ENCODE measurements at regions of chr2 and their contacts with region 1.

Region 1: DNA sequence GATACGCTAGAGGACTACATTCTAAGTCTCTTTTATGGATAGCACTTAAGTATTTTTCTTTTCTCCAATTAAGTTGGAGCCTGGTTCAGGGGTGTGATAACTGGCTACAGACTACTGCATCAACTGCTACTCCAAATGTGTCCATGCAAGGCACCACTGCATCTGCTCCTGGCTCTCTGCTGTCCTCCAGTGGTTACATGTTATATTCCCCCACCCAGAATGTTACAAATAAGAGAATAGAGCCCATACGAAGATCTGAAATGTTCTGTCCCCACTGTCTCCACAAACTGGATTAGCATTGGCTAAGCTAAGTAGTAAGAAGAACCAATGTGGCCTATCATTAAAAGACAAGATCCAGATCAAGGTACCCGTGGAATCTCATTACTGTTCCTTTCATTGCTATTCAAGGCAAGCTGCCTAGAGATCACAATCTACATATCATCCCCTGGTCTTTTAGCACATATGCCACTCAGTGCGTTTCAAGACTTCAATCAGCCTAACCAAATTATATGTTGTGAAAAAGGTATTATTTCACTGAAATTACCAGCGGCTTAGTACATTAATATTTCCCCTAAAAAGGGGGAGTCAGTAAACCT is 308.3 kb upstream of the SLC8A1 start:
- DNase-seq: peak; percentile 35
- ATAC-seq: peak; percentile 99
- H3K4me3 ChIP-seq: no peak overlapping the region
- H3K27ac ChIP-seq: no peak overlapping the region
- H3K4me1 ChIP-seq: no peaks in the 10 kb centered on the region
- H3K27me3 ChIP-seq: no peaks in the 10 kb centered on the region
- CTCF ChIP-seq: peak; percentile 77
- EP300 ChIP-seq: no peak
- POLR2A ChIP-seq: no peak
- RAD21 ChIP-seq: peak; percentile 68

Region 2: GRCh38 chr2:39837856-39838453 is 922.2 kb before region 1 on chr2:
- CTCF ChIA-PET with region 1: no interaction called
- POLR2A ChIA-PET with region 1: no interaction called
- in situ Hi-C with region 1: no loop called
- intact Hi-C with region 1: loop called (anchors 10 kb)
- DNase-seq: peak; percentile 61
- ATAC-seq: peak; percentile 95
- H3K4me3 ChIP-seq: no peak overlapping the region
- H3K27ac ChIP-seq: no peak overlapping the region
- H3K4me1 ChIP-seq: no peaks in the 10 kb centered on the region
- H3K27me3 ChIP-seq: no peaks in the 10 kb centered on the region; a peak in 1 of 5 replicates
- CTCF ChIP-seq: peak; percentile 85
- EP300 ChIP-seq: no peak
- POLR2A ChIP-seq: no peak
- RAD21 ChIP-seq: 0 out of 2 replicates have a peak, but pooled peaks have one; percentile 21

Region 3: DNA sequence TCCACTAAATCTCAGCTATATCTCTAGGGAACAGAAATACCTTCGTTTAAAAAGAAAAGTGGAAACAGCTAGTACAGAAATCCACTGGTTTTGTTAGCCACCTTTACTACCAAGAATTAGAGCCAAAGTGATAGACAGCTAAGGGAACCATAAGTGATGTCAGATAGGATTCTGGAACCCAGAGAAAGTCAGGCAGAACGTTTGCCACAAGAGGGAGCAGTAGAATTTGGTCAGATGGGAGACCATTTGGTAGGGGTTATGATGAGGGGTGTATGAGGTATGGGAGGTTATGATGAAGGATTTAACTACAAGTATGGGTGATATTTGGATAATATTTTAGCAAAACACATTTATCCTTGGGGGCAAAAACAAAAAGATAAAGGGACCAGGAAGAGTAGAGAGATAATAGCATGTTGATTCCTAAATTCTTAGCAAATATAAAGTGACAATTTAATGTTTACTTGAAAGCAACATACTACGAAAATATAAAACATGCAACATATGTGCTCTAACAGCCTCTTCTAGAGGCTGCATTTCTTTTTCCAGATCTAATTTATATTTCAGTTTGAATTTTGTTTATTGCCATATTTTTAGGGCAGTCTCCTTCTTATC is 311.6 kb before region 1 on chr2:
- CTCF ChIA-PET with region 1: interaction called, 3 read pairs
- POLR2A ChIA-PET with region 1: no interaction called
- in situ Hi-C with region 1: no loop called
- intact Hi-C with region 1: loop called (anchors 2 kb)
- DNase-seq: peak; percentile 21
- ATAC-seq: peak; percentile 76
- H3K4me3 ChIP-seq: no peak overlapping the region
- H3K27ac ChIP-seq: no peak overlapping the region
- H3K4me1 ChIP-seq: no peaks in the 10 kb centered on the region
- H3K27me3 ChIP-seq: peaks cover 2 to 36% of the 10 kb centered on the region in 2 experiments; a peak in 4 of 5 replicates
- CTCF ChIP-seq: peak; percentile 60
- EP300 ChIP-seq: no peak
- POLR2A ChIP-seq: no peak
- RAD21 ChIP-seq: no peak